ENCODE measurements at regions of chr6 and their contacts with region 1.

Region 1: DNA sequence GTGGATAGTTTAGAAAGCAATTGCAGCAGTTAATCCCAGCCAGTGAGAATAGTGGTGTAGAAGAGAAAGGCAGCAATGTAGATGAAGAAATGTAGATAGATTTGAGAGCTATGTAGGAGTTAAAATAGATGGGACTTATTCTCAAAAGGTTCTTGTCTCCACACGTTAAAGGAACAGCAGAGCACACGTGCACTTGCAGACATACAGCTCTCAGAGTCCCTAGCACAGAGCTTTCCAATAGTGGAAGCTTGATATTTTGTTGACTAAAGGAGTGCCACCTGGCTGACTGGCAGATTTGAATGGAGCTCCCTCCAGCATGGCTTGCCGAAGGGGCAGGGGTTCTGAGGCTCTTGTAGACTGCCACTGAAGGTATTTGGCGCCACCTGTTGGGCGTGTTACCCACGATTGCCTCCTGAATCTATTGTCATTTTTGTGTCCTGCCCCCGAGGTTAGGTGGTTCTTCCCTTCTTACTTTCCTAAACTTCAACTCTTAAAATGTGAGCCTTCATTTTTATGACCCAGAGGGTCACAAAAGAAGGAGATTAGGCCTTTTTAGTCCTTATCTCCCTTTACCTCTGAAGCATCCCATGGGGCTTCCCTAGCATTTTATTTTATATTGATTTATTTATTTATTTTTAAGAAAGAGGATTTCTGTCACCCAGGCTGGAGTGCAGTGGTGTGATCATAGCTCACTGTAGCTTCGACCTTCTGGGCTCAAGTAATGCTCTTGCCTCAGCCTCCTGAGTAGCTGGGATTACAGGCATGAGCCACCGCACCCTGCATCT is 16.4 kb downstream of the BRD2 start:
- DNase-seq: peak; percentile 90

Region 2: GRCh38 chr6:32655203-32655710 is 329.5 kb before region 1 on chr6:
- in situ Hi-C with region 1: no loop called
- DNase-seq: no peak

Region 3: DNA sequence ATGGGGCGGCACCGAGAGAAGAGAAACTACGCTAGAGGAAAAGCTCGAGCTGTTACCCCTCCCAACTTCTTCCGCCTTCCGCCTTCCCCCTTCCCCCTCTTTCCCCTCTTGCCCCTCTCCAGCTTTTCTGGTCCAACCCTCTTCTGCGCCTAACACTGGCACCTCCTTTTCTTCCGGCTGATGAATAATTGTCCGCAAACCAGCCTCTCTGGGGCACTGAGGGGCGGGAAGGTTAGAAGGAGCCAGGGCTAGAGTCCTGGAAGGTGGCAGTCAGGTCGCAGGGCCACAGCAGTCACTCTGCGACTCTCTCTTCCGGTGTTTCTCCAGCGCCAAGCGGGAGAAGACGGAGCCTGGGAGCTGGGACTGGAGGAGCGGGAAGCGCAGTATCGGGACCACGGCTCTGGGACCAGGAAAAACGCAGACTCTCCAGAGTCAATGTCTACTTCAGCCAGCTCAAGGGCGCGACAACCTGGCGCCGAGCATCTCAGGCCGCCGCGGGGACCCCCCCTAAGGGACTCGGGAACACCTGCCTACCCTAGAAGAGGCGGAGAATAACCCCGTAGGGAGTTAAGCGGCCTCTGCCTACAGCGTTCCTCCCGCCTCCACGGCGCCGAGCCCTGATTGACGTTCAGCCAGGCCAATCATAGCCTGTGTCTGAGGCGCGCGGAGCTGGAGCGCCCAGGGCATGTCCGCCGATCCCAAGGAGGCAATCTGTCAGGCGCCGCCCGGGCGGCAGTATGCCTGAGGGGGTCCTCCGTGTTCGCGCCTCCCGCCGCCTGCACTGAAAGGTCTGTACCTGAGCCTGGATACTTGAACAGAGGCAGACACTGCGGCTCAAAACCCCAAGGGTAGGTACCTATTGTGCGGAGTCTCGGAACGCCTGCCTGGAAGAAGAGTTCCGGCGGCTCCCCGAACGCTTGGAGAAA is 90.5 kb before region 1 on chr6:
- in situ Hi-C with region 1: no loop called
- DNase-seq: peak; percentile 89

Region 4: GRCh38 chr6:32952817-32953739 is 31.7 kb before region 1 on chr6 and contains the start of gene HLA-DMA:
- in situ Hi-C with region 1: no loop called
- DNase-seq: peak; percentile 98
- total RNA-seq, gene HLA-DMA: 34.0 and 35.3 TPM in 2 replicates

Region 5: GRCh38 chr6:33075568-33076405 is 91.0 kb after region 1 on chr6 and contains the start of gene HLA-DPB1:
- in situ Hi-C with region 1: loop called (anchors 25 kb)
- DNase-seq: peak; percentile 87
- total RNA-seq, gene HLA-DPB1: 1.7 and 3.5 TPM in 2 replicates

Measured in SK-MEL-5 (cell line).